Sigmoid colon (tissue), 7 donors: ENCODE measurements at regions of chr17 and their contacts with region 1.

Region 1: GRCh38 chr17:58417300-58418092 is at the start of gene RNF43:
- DNase-seq: peak; percentile 95
- H3K4me3 ChIP-seq: peak within 1 kb of the TSS; percentile 23 to 42 (median 36)
- H3K27ac ChIP-seq: peak within 1 kb of the TSS; percentile 7 to 54 (median 48)
- H3K4me1 ChIP-seq: peaks cover 0 to 7% (median 2%) of the 10 kb centered on the region in 4 donors
- H3K27me3 ChIP-seq: no peaks in the 10 kb centered on the region
- CTCF ChIP-seq: peak; percentile 73 to 91 (median 73)
- EP300 ChIP-seq: no peak
- POLR2A ChIP-seq: peak in 1 of 2 donors; percentile 84
- total RNA-seq, gene RNF43: 0.14 to 0.33 (median 0.28) TPM in 3 of 4 donors, not detected in the other

Region 2: GRCh38 chr17:58249270-58250133 is 168.0 kb before region 1 on chr17:
- intact Hi-C with region 1: loop called (anchors 2 kb)
- DNase-seq: peak; percentile 80
- H3K4me3 ChIP-seq: peak overlapping the region; percentile 26 to 52 (median 44)
- H3K27ac ChIP-seq: no peak overlapping the region
- H3K4me1 ChIP-seq: peaks cover 0 to 13% (median 12%) of the 10 kb centered on the region in 4 donors
- H3K27me3 ChIP-seq: peaks cover 0 to 31% (median 14%) of the 10 kb centered on the region in 3 donors
- CTCF ChIP-seq: peak; percentile 56 to 94 (median 76)
- EP300 ChIP-seq: no peak
- POLR2A ChIP-seq: no peak

Region 3: DNA sequence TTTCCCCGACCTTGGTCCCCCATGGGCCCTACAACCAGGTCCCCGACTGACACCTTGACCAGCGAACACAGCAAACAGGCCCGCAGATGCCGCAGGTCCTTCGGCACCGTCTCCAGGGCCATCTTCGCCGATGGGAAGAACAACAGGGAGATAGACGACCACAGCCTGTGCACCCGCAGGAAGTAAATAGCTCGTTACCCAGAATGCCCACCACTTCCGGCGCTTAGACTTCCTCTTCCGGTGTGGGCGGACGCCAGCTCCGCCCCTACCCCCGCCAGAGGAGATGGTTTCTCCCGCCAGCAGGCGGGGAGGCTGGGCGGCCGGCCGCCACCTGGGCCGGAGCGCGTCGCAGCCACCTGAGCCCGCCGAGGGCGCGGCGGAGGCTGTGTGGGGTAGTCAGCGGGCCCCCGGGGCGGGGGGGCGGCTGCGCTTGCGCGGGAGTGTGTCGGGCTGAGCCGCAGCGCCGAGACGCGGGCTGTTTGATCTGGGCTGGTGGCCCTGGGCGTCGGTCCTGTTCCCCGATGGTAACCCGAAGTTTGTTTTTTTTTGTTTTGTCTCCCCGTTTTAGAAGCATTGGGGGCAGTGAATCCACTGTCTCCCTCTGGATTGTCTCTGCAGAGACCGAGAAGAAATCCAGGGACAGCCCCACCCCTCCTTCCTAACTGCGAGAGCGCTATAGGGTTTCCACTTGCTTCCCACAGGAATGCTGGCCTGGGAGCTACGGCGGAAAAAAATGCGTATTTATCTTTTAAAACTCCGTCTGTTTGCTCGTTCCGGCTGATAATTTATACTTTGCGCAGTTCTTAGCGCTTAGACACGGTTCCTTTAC is 65.3 kb before region 1 on chr17 and contains the start of gene SUPT4H1:
- intact Hi-C with region 1: loop called (anchors 2 kb)
- DNase-seq: peak; percentile 93
- H3K4me3 ChIP-seq: peak within 1 kb of the TSS; percentile 58 to 94 (median 92)
- H3K27ac ChIP-seq: peak within 1 kb of the TSS; percentile 95 to 98 (median 96)
- H3K4me1 ChIP-seq: peaks cover 0 to 22% (median 14%) of the 10 kb centered on the region in 4 donors
- H3K27me3 ChIP-seq: no peaks in the 10 kb centered on the region
- CTCF ChIP-seq: no peak
- EP300 ChIP-seq: peak in 1 of 4 donors; percentile 36
- POLR2A ChIP-seq: peak; percentile 33 to 66
- total RNA-seq, gene SUPT4H1: 50.5 to 65.3 (median 57.4) TPM

Region 4: GRCh38 chr17:58487589-58488427 is 70.3 kb after region 1 on chr17 and contains the start of gene HSF5:
- intact Hi-C with region 1: no loop called
- DNase-seq: no peak
- H3K4me3 ChIP-seq: peak within 1 kb of the TSS in 3 of 4 donors; percentile 6 to 23 (median 22)
- H3K27ac ChIP-seq: no peak within 1 kb of the TSS
- H3K4me1 ChIP-seq: peaks cover 0 to 8% (median 1%) of the 10 kb centered on the region in 4 donors
- H3K27me3 ChIP-seq: no peaks in the 10 kb centered on the region
- CTCF ChIP-seq: peak in 1 of 4 experiments; percentile 26
- EP300 ChIP-seq: no peak
- POLR2A ChIP-seq: no peak
- total RNA-seq, gene HSF5: under 0.01 TPM in 1 of 4 donors, not detected in the others